ENCODE measurements at regions of chr7 and their contacts with region 1.

Region 1: GRCh38 chr7:27196287-27196767 is 3.6 kb downstream of the HOXA13 start:
- DNase-seq: no peak
- ATAC-seq: no peak
- H3K4me3 Mint-ChIP-seq: no peak overlapping the region
- H3K27ac Mint-ChIP-seq: no peak overlapping the region
- H3K4me1 Mint-ChIP-seq: peaks cover 30% of the 10 kb centered on the region
- H3K27me3 Mint-ChIP-seq: peaks cover 65% of the 10 kb centered on the region
- CTCF ChIP-seq: no peak

Region 2: GRCh38 chr7:26891400-26892355 is 304.6 kb before region 1 on chr7:
- CTCF ChIA-PET with region 1: no interaction called
- POLR2A ChIA-PET with region 1: no interaction called
- intact Hi-C with region 1: no loop called
- DNase-seq: no peak
- ATAC-seq: no peak
- H3K4me3 Mint-ChIP-seq: no peak overlapping the region
- H3K27ac Mint-ChIP-seq: no peak overlapping the region
- H3K4me1 Mint-ChIP-seq: no peaks in the 10 kb centered on the region
- H3K27me3 Mint-ChIP-seq: peaks cover 7% of the 10 kb centered on the region
- CTCF ChIP-seq: no peak

Region 3: GRCh38 chr7:26978146-26978545 is 218.2 kb before region 1 on chr7:
- CTCF ChIA-PET with region 1: no interaction called
- POLR2A ChIA-PET with region 1: no interaction called
- intact Hi-C with region 1: no loop called
- DNase-seq: no peak
- ATAC-seq: no peak
- H3K4me3 Mint-ChIP-seq: no peak overlapping the region
- H3K27ac Mint-ChIP-seq: no peak overlapping the region
- H3K4me1 Mint-ChIP-seq: no peaks in the 10 kb centered on the region
- H3K27me3 Mint-ChIP-seq: peaks cover 15% of the 10 kb centered on the region
- CTCF ChIP-seq: no peak

Region 4: GRCh38 chr7:27210441-27211083 is 14.2 kb after region 1 on chr7:
- CTCF ChIA-PET with region 1: interaction called, 16 read pairs
- POLR2A ChIA-PET with region 1: no interaction called
- intact Hi-C with region 1: no loop called
- DNase-seq: no peak
- ATAC-seq: peak; percentile 49
- H3K4me3 Mint-ChIP-seq: peak overlapping the region; percentile 64
- H3K27ac Mint-ChIP-seq: no peak overlapping the region
- H3K4me1 Mint-ChIP-seq: peaks cover 14% of the 10 kb centered on the region
- H3K27me3 Mint-ChIP-seq: peaks cover 75% of the 10 kb centered on the region
- CTCF ChIP-seq: no peak

Region 5: GRCh38 chr7:27532314-27532713 is 336.0 kb after region 1 on chr7:
- CTCF ChIA-PET with region 1: no interaction called
- POLR2A ChIA-PET with region 1: no interaction called
- intact Hi-C with region 1: no loop called
- DNase-seq: no peak
- ATAC-seq: no peak
- H3K4me3 Mint-ChIP-seq: no peak overlapping the region
- H3K27ac Mint-ChIP-seq: no peak overlapping the region
- H3K4me1 Mint-ChIP-seq: no peaks in the 10 kb centered on the region
- H3K27me3 Mint-ChIP-seq: no peaks in the 10 kb centered on the region
- CTCF ChIP-seq: no peak

Region 6: DNA sequence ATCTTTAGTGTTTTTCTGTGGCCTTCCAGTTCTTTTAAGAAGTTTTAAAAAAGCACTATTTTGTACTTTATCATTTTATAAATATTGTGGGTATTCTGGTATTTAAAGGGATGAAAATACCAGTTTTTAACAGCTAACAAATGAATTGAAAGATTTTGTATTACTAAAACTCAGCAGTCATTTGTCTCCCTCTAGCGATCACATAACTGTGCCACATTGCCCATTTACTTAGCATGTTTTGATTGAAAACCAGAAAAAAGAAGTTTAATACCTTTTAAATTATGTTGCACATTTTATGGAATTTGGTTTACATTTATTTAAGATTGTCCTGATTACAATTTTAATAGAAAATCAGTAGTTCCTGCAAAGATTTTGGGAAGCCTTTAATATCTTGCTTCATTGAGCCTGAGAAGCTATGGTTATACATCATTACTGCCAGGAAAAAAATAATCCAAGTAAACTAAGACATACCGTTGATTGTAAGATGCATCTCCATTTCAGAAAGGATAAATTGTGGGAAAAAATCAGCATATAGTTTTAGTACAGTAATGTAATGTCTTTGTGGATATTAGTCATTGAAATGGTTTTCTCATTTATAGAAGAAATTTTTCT is 578.5 kb after region 1 on chr7:
- CTCF ChIA-PET with region 1: interaction called, 23 read pairs
- POLR2A ChIA-PET with region 1: no interaction called
- intact Hi-C with region 1: loop called (anchors 2 kb)
- DNase-seq: no peak
- ATAC-seq: no peak
- H3K4me3 Mint-ChIP-seq: no peak overlapping the region
- H3K27ac Mint-ChIP-seq: no peak overlapping the region
- H3K4me1 Mint-ChIP-seq: no peaks in the 10 kb centered on the region
- H3K27me3 Mint-ChIP-seq: no peaks in the 10 kb centered on the region
- CTCF ChIP-seq: no peak

Region 7: DNA sequence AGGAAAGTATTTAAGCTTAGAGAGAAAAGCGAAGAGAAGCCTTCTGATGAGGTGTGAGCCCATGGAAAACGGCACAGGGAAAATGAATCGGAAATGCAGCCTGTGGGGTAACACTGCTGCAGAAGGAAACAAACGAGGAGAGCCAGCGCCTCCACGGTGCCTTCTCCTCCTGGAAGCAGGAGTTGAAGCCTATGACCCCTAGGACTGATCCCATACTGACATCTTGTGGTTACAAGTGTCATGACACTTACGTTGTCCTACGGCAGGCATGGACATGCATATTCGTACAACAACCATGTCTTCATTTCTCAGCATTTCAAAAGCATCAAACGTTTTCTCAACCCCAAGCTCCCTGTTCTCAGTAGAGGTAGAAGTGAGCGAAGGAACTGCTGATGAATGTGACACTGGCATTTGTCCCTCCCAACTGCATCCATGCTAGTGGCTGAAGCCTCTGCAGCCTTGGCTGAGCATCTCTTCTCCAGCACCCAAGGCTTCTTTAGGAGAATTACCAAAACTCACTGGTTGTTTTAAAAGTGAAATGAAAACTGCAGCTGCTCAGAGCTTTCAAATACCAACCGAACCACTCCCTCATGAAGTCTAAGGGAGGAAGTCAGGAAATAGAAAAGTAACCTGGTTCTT is 824.1 kb after region 1 on chr7:
- CTCF ChIA-PET with region 1: interaction called, 16 read pairs
- POLR2A ChIA-PET with region 1: no interaction called
- intact Hi-C with region 1: loop called (anchors 1 kb)
- DNase-seq: no peak
- ATAC-seq: peak; percentile 77
- H3K4me3 Mint-ChIP-seq: no peak overlapping the region
- H3K27ac Mint-ChIP-seq: no peak overlapping the region
- H3K4me1 Mint-ChIP-seq: peaks cover 9% of the 10 kb centered on the region
- H3K27me3 Mint-ChIP-seq: no peaks in the 10 kb centered on the region
- CTCF ChIP-seq: no peak

Region 8: DNA sequence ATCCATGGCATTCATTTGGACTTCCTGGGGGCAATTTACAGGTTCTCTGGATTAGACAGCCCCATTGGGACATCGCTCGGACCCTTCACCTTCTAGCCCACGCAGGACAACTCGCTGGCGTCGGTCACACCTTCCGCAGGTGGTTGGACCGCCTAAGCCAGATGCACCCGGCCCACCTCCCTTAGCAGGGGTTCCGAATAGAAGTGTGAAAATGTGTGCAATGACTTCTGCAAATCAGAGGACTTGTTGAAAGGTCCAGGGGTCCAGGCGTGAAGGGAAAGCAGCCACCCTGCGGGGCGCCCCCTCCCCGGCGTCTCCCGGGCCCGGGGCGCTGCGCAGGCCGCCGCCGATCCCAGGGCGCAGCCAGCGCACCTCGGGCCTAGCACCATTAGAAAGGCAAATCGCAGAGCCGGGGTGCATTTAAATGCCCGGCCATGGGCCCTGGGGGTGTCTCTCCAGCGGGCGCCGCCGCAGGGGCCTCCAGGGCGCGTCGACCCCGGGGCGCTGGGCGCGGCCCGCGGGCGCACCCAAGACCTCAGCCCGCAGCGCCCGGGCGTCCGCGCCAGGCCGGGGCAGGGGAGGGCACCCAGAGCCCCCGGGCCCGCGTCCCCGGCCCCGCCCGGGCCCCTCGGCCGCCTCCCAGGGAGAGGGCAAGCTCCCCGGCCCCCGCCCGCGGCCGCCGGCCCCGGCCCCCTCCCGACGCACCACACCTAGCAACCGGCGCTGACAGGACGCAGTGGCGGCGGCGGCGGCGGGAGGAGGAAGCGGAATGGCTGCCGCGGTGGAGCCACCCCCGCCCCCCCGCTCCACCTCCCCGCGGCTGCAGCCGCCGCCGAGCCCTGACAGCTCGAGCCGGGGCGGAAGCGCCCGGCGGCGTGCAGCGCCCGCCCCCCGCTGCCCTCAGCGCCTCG is 983.0 kb after region 1 on chr7:
- CTCF ChIA-PET with region 1: no interaction called
- POLR2A ChIA-PET with region 1: no interaction called
- intact Hi-C with region 1: loop called (anchors 5 kb)
- DNase-seq: peak; percentile 73
- ATAC-seq: peak; percentile 59
- H3K4me3 Mint-ChIP-seq: peak overlapping the region; percentile 80
- H3K27ac Mint-ChIP-seq: peak overlapping the region; percentile 84
- H3K4me1 Mint-ChIP-seq: peaks cover 77% of the 10 kb centered on the region
- H3K27me3 Mint-ChIP-seq: no peaks in the 10 kb centered on the region
- CTCF ChIP-seq: no peak

Region 9: GRCh38 chr7:28853834-28854749 is 1657.8 kb after region 1 on chr7:
- CTCF ChIA-PET with region 1: interaction called, 9 read pairs
- POLR2A ChIA-PET with region 1: no interaction called
- intact Hi-C with region 1: loop called (anchors 1 kb)
- DNase-seq: peak; percentile 79
- ATAC-seq: peak; percentile 98
- H3K4me3 Mint-ChIP-seq: peak overlapping the region; percentile 83
- H3K27ac Mint-ChIP-seq: peak overlapping the region; percentile 24
- H3K4me1 Mint-ChIP-seq: peaks cover 11% of the 10 kb centered on the region
- H3K27me3 Mint-ChIP-seq: peaks cover 24% of the 10 kb centered on the region
- CTCF ChIP-seq: no peak

Region 10: GRCh38 chr7:29105752-29106668 is 1909.7 kb after region 1 on chr7:
- CTCF ChIA-PET with region 1: no interaction called
- POLR2A ChIA-PET with region 1: no interaction called
- intact Hi-C with region 1: loop called (anchors 5 kb)
- DNase-seq: no peak
- ATAC-seq: peak; percentile 45
- H3K4me3 Mint-ChIP-seq: no peak overlapping the region
- H3K27ac Mint-ChIP-seq: no peak overlapping the region
- H3K4me1 Mint-ChIP-seq: no peaks in the 10 kb centered on the region
- H3K27me3 Mint-ChIP-seq: peaks cover 8% of the 10 kb centered on the region
- CTCF ChIP-seq: no peak